ENCODE measurements at regions of chr22 and their contacts with region 1.

Region 1: GRCh38 chr22:27919222-27919941 is at the start of gene PITPNB:
- DNase-seq: peak; percentile 97
- H3K4me3 ChIP-seq: peak within 1 kb of the TSS; percentile 73 to 89 (median 78)
- H3K4me3 Mint-ChIP-seq: peak within 1 kb of the TSS; percentile 96 to 99
- H3K27ac ChIP-seq: peak within 1 kb of the TSS; percentile 88 to 90
- H3K27ac Mint-ChIP-seq: peak within 1 kb of the TSS; percentile 95 to 99 (median 97)
- H3K4me1 ChIP-seq: peaks cover 18 to 27% of the 10 kb centered on the region in 2 donors
- H3K4me1 Mint-ChIP-seq: peaks cover 41% of the 10 kb centered on the region
- H3K27me3 ChIP-seq: no peaks in the 10 kb centered on the region
- H3K27me3 Mint-ChIP-seq: peaks cover 0 to 2% (median 0%) of the 10 kb centered on the region in 3 donors
- CTCF ChIP-seq: no peak
- polyA plus RNA-seq, gene PITPNB: 19.2 to 29.1 (median 25.2) TPM

Region 2: GRCh38 chr22:26672590-26673468 is 1246.6 kb before region 1 on chr22:
- intact Hi-C with region 1: loop called in 1 of 2 experiments (anchors 5 kb)
- DNase-seq: peak; percentile 93 to 95 (median 94)
- H3K4me3 ChIP-seq: peak overlapping the region; percentile 69 to 83 (median 69)
- H3K4me3 Mint-ChIP-seq: peak overlapping the region; percentile 86 to 95
- H3K27ac ChIP-seq: peak overlapping the region; percentile 89 to 92
- H3K27ac Mint-ChIP-seq: peak overlapping the region; percentile 95 to 99 (median 99)
- H3K4me1 ChIP-seq: peaks cover 42 to 47% of the 10 kb centered on the region in 2 donors
- H3K4me1 Mint-ChIP-seq: peaks cover 52% of the 10 kb centered on the region
- H3K27me3 ChIP-seq: no peaks in the 10 kb centered on the region
- H3K27me3 Mint-ChIP-seq: peaks cover 0 to 2% (median 0%) of the 10 kb centered on the region in 3 donors
- CTCF ChIP-seq: no peak

Region 3: DNA sequence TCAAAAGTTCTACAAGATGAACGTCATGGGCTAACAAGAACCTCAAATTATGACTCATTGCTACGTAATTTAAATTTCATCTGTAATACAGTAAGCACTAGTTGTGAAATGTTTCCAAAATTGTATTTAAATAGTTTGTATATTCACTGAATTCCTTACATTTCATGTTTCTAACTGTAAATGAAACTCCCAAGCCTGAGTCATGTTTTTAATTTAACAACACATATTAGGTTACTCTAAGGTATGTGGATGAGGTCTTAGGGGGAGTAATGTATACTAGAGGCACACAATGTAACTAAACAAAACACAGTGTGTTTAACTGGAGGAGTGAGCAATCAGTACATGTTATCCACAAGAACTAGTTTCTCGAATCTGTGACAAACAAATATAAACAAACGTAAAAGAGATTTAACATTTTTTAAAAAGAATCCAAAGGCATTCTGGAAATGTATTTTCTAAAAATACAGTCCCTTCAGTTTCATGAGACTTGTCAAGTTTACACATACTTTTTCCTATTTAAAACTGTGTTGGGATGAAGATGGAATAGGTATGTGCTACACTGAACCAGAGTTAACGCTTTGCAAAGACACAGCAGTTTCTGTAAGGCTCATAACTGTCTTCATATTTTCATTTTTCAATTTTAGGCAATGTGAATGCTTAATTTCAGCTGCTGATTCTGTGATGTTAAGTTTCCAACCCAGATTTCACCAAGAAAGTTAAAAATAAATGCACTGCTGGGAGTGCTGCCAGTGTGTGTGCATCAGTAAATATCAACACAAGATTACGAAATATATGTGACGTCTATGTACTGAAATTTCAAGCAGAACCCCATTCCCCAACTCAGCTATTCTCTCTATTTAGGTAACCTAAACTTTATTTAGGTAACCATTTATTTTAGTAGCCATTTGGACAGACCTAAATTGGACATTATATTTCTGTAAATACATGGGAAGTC is 53.0 kb before region 1 on chr22:
- intact Hi-C with region 1: loop called in 1 of 2 experiments (anchors 5 kb)
- DNase-seq: peak in 2 of 3 donors; percentile 57 to 69
- H3K4me3 ChIP-seq: no peak overlapping the region
- H3K4me3 Mint-ChIP-seq: no peak overlapping the region
- H3K27ac ChIP-seq: peak overlapping the region in 1 of 2 donors; percentile 57
- H3K27ac Mint-ChIP-seq: peak overlapping the region; percentile 54 to 92 (median 87)
- H3K4me1 ChIP-seq: peaks cover 4 to 18% of the 10 kb centered on the region in 2 donors
- H3K4me1 Mint-ChIP-seq: peaks cover 22% of the 10 kb centered on the region
- H3K27me3 ChIP-seq: no peaks in the 10 kb centered on the region
- H3K27me3 Mint-ChIP-seq: peaks cover 0 to 2% (median 0%) of the 10 kb centered on the region in 3 donors
- CTCF ChIP-seq: no peak